Activated CD4-positive, alpha-beta T cell treated with anti-CD3 and anti-CD28 coated beads, Interleukin-2, amount 10 ng/mL, durations not matched to agents 7 days and 5 days (primary cell): ENCODE measurements at regions of chr15 and their contacts with region 1.

Region 1: DNA sequence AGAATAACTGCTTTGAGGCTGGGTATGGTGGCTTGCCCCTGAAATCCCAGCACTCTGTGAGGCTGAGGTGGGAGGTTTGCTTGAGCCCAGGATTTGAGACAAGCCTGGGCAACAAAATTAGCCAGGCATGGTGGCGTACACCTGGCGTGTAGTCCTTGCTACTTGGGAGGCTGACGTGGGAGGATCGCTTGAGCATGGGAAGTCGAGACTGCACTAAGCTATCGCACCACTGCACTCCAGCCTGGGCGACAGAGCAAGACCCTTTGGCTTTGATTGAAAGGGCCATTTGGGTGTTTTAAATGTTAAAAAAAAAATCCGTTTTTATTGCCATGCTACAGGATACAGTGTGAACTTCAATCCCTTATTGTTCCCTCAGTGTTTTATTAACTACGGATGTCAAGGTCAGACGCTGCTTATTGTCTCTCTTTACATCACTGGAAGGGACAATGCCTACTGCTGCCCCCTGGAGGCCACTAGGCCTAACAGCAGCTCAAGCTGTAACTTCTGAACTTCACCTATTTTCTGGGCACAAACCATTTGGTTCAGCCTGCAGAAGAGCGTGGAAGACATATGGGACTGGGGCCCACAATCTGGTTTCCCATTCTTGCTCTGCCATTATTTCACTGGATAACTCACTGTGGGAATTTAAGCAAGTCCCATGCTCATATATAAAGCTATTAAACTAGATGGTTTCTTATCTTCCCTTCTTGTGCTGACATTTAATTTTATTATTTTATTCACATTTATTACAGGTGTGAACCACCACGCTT is 15.3 kb upstream of the IREB2 start:
- DNase-seq: peak; percentile 77
- H3K4me3 Mint-ChIP-seq: no peak overlapping the region
- H3K27ac Mint-ChIP-seq: no peak overlapping the region
- H3K4me1 Mint-ChIP-seq: peaks cover 17% of the 10 kb centered on the region
- H3K27me3 Mint-ChIP-seq: peaks cover 15% of the 10 kb centered on the region

Region 2: DNA sequence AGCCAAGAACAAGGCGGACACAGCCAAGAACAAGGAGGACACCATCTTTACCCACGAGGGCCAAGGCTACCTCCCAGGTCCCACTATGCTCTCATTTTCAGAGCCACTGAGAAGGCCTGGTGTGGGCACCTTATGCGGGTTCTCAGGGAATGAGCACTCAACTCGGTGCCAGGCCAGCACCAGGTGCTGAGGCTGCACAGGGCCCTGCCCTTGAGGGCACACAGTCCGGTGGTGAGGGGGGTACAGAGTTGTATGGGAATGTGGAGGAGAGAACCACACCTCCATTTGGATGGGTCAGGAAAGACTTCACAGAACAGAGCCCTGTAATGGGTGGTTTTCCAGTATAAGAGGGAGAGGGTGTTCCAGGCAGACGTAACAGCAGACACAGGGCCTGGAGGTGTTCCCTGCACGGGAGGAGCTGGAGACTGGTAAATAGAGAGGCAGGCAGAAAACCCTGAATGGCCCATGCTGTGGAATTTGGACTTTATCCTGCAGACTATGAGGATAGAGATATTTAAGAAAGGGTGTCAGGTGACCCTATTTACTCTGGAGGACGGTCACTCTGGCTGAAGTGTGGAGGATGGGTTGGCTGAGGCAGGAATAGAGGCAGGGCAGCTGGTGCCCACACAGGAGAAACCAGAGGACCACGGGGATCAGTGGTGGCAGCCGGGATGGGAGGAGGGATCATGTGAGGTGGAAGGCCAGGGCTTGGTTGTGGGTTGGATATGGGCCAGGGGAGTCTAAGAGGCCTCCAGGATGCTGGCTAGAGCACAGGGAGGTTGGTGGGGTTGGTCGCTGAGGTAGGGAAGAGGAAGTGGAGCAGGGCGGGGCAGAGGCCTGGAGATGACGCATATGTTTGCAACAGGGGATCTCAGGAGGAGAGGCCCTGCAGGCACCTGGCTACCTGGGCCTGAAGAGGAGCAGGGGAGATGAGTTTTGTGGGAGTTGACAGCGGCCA is 48.0 kb before region 1 on chr15:
- CTCF ChIA-PET with region 1: no interaction called
- POLR2A ChIA-PET with region 1: no interaction called
- DNase-seq: peak; percentile 30
- H3K4me3 Mint-ChIP-seq: no peak overlapping the region
- H3K27ac Mint-ChIP-seq: peak overlapping the region; percentile 81
- H3K4me1 Mint-ChIP-seq: peaks cover 15% of the 10 kb centered on the region
- H3K27me3 Mint-ChIP-seq: peaks cover 18% of the 10 kb centered on the region

Region 3: DNA sequence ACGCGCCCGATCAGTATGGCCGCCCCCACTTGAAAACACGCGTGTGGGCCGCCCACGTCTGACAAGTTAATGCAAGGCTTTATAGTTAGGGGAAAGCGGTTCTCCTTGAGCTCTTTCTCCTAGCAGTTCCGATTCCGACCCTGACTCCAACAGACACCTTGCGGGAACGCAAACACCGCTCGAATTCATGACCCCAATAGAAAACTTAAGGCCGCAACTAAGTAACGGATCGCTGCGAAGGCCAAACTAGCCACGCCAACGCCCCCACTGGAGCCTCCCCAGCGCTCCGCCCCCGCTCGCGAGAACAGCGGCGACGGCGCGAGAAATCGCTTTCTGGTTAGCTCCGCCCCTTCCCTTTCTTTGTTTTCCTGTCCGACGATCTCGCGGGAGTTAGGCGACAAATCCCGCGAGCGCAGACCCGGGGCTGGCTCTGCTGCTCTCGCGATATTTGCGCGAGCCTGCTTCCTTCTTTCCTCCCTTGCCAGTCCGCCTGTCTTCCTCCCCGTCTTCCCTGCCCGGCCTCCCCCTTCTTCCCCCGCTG is 15.1 kb after region 1 on chr15 and contains the start of gene IREB2:
- CTCF ChIA-PET with region 1: interaction called, 15 read pairs
- POLR2A ChIA-PET with region 1: no interaction called
- DNase-seq: peak; percentile 98
- H3K4me3 Mint-ChIP-seq: peak within 1 kb of the TSS; percentile 88
- H3K27ac Mint-ChIP-seq: peak within 1 kb of the TSS; percentile 94
- H3K4me1 Mint-ChIP-seq: peaks cover 43% of the 10 kb centered on the region
- H3K27me3 Mint-ChIP-seq: no peaks in the 10 kb centered on the region
- total RNA-seq, gene IREB2: 52.9 to 57.2 TPM